ENCODE measurements at regions of chr2 and their contacts with region 1.

Region 1: GRCh38 chr2:201950606-201951005 is 83.0 kb upstream of the FZD7 start:
- DNase-seq: no peak
- H3K4me3 Mint-ChIP-seq: no peak overlapping the region
- H3K27ac Mint-ChIP-seq: no peak overlapping the region
- H3K4me1 Mint-ChIP-seq: no peaks in the 10 kb centered on the region
- H3K27me3 Mint-ChIP-seq: peaks cover 12% of the 10 kb centered on the region
- CTCF ChIP-seq: no peak

Region 2: GRCh38 chr2:202848813-202849212 is 898.2 kb after region 1 on chr2:
- CTCF ChIA-PET with region 1: interaction called, 10 read pairs
- intact Hi-C with region 1: no loop called
- DNase-seq: no peak
- H3K4me3 Mint-ChIP-seq: no peak overlapping the region
- H3K27ac Mint-ChIP-seq: no peak overlapping the region
- H3K4me1 Mint-ChIP-seq: no peaks in the 10 kb centered on the region
- H3K27me3 Mint-ChIP-seq: no peaks in the 10 kb centered on the region
- CTCF ChIP-seq: no peak